Naive thymus-derived CD4-positive, alpha-beta T cell (primary cell): ENCODE measurements at regions of chr6 and their contacts with region 1.

Region 1: DNA sequence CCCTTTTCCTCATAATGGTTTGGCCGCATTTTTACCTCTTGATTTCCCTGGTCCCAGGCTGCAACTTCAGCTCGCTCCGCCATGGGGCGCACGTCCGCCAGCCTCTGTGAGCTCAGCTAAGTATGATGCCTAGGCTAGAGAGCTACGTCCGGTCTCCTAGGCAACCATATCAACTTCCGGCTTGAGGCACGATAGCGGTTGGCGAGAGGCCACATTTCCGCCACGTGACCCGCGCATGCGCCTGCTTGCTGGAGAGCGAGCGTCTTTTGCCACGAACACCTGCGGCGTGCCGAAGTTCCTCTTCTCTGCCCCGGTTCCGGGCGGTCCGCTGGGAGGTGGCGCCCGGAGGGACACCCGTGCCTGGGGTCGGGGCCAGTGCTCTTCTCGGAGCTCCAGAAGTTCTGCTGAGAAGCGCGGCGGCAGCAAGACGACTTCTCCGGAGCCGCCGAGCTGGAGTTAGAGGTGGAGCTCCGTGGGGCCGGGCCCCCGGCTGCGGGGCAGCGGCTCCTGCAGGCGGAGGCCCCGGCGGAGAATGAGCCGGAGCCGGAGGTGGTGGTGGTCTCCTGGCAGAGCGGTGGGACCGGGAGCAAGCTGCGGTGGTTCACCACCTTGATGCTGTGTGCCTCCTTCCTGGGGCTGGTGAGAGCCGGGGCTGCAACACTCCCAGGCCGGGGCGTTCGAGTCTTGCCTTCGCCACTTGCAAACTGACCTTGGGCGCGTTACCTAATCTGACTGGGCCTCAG is 172.0 kb downstream of the SLC16A10 start:
- DNase-seq: peak; percentile 98 to 99 (median 99)
- ATAC-seq: peak; percentile 99
- H3K4me3 ChIP-seq: peak overlapping the region; percentile 89
- H3K4me3 Mint-ChIP-seq: peak overlapping the region; percentile 75 to 90 (median 86)
- H3K27ac ChIP-seq: peak overlapping the region; percentile 87
- H3K27ac Mint-ChIP-seq: peak overlapping the region; percentile 83 to 97 (median 92)
- H3K4me1 ChIP-seq: peaks cover 6 to 17% of the 10 kb centered on the region in 2 donors
- H3K4me1 Mint-ChIP-seq: peaks cover 12 to 37% (median 30%) of the 10 kb centered on the region in 7 donors
- H3K27me3 ChIP-seq: no peaks in the 10 kb centered on the region
- H3K27me3 Mint-ChIP-seq: peaks cover 0 to 18% (median 0%) of the 10 kb centered on the region in 5 donors

Region 2: DNA sequence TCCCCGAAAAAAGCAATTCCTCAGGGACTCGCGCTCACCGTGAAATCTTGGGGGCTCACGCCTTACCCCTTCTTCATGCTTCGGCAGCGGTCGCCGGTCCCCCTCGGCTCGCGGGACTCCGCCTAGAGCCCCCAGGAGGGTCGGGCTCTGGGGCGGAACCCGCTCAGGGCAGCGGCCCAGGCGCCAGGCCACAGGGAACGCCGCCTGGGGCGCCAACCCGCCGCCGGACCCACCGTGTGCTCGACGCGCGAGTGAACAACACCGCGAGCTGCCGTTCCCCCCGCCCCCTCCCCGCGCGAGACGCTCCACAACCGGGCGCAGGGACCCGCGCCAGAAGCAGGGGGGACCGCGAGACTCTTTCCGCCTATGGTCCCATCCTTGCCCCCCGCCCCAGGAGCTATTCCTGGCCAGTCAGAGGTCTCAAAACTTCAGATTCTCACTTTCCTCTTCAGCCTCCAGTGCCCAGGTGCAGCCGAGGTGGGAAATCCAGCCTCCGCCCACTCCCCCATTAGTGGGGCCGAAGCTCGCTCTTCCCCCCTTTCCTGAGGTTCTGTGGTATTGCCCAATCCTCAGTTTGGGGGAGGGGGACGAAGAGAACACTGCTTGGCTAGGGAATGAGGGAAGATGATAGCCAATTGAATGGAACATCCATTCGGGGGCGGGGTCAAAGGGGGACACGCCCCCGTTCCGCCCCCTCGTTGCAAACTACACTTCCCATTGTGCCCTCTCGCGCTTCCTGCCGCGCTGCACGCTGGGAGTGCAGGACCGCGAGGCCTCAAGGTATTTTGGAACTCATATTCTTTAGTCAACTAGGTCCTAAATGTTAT is 1079.6 kb before region 1 on chr6 and contains the start of gene WASF1:
- CTCF ChIA-PET with region 1: no interaction called
- POLR2A ChIA-PET with region 1: no interaction called
- intact Hi-C with region 1: loop called in 1 of 2 experiments (anchors 1 kb)
- DNase-seq: peak; percentile 84 to 94 (median 91)
- ATAC-seq: peak; percentile 96
- H3K4me3 ChIP-seq: peak within 1 kb of the TSS; percentile 83
- H3K4me3 Mint-ChIP-seq: peak within 1 kb of the TSS in 6 of 10 donors; percentile 84 to 90 (median 88)
- H3K27ac ChIP-seq: peak within 1 kb of the TSS; percentile 90
- H3K27ac Mint-ChIP-seq: peak within 1 kb of the TSS in 8 of 9 donors; percentile 2 to 87 (median 66)
- H3K4me1 ChIP-seq: peaks cover 17 to 23% of the 10 kb centered on the region in 2 donors
- H3K4me1 Mint-ChIP-seq: peaks cover 4 to 8% (median 5%) of the 10 kb centered on the region in 7 donors
- H3K27me3 ChIP-seq: peaks cover 0 to 7% of the 10 kb centered on the region in 2 donors
- H3K27me3 Mint-ChIP-seq: peaks cover 8 to 21% (median 9%) of the 10 kb centered on the region in 5 donors
- total RNA-seq, gene WASF1: 0.19 to 4.7 (median 0.51) TPM

Region 3: DNA sequence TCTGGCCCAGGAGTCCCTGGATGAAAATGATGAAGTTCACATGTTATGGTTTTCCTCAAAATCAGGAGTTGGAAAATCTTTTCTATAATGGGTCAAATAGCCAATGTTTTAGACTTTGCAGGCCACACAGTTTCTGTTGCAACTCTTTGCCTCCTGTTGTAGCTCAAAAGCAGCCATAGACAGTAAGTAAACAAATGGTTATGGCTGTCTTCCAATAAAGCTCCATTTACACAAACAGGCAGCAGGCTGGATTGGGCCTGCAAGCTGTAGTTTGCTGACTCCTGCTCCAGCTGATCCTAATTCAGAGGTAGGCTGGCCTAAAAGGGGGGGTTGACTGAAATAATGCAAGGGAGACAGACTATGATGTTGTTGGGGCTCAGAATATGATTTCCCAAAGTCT is 934.1 kb before region 1 on chr6:
- CTCF ChIA-PET with region 1: no interaction called
- POLR2A ChIA-PET with region 1: no interaction called
- intact Hi-C with region 1: no loop called
- DNase-seq: no peak
- ATAC-seq: no peak
- H3K4me3 ChIP-seq: no peak overlapping the region
- H3K4me3 Mint-ChIP-seq: no peak overlapping the region
- H3K27ac ChIP-seq: no peak overlapping the region
- H3K27ac Mint-ChIP-seq: no peak overlapping the region
- H3K4me1 ChIP-seq: no peaks in the 10 kb centered on the region
- H3K4me1 Mint-ChIP-seq: no peaks in the 10 kb centered on the region
- H3K27me3 ChIP-seq: no peaks in the 10 kb centered on the region
- H3K27me3 Mint-ChIP-seq: peaks cover 0 to 9% (median 0%) of the 10 kb centered on the region in 5 donors

Region 4: GRCh38 chr6:110958329-110959192 is 300.7 kb before region 1 on chr6 and contains the start of gene GTF3C6:
- CTCF ChIA-PET with region 1: no interaction called
- POLR2A ChIA-PET with region 1: no interaction called
- intact Hi-C with region 1: loop called (anchors 1 kb)
- DNase-seq: peak; percentile 85 to 94 (median 91)
- ATAC-seq: peak; percentile 99
- H3K4me3 ChIP-seq: peak within 1 kb of the TSS; percentile 86
- H3K4me3 Mint-ChIP-seq: peak within 1 kb of the TSS; percentile 95 to 99 (median 96)
- H3K27ac ChIP-seq: peak within 1 kb of the TSS; percentile 81
- H3K27ac Mint-ChIP-seq: peak within 1 kb of the TSS; percentile 96 to 99 (median 97)
- H3K4me1 ChIP-seq: peaks cover 4% of the 10 kb centered on the region in 2 donors
- H3K4me1 Mint-ChIP-seq: peaks cover 13 to 27% (median 20%) of the 10 kb centered on the region in 7 donors
- H3K27me3 ChIP-seq: no peaks in the 10 kb centered on the region
- H3K27me3 Mint-ChIP-seq: peaks cover 0 to 7% (median 0%) of the 10 kb centered on the region in 5 donors
- total RNA-seq, gene GTF3C6: 18.1 to 100 (median 29.9) TPM

Region 5: DNA sequence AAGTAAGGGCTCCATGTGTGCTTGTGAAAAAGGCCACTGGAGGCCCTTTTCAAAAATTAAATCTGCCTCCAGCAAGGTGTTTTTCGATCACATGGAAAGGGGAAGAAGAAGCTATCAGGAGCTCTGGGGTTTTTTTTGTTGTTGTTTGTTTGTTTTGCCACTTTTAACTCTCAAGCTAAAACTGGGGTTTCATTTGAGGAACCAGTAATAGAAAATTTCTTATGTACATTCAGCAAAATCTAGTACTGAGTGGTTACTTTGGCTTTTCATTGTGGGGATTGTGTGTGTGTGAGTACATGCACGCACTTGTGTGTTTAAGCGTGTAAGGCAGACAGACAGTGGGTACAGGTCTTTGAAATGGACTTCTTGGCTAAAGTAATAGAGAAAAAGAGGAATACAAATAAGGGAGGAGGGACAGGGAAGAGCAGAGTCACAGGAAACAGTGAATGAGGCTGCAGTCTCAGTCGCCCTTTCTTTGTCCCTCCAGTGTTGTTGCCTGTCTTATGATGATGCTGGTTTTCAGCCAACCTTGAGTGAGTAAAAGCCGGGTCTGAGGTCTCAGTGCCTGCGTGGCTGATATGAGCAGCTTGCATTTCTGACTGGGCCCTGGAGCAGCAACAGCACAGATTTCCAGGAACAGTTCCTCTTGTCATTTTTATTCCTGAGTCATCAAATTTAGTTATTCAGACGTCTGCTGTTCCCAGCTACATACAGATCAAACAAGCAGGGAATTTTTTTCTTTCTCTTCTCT is 145.7 kb before region 1 on chr6:
- CTCF ChIA-PET with region 1: no interaction called
- POLR2A ChIA-PET with region 1: no interaction called
- intact Hi-C with region 1: loop called in 1 of 2 experiments (anchors 1 kb)
- DNase-seq: peak in 4 of 9 donors; percentile 23 to 33 (median 23)
- ATAC-seq: peak; percentile 75
- H3K4me3 ChIP-seq: peak overlapping the region; percentile 1
- H3K4me3 Mint-ChIP-seq: peak overlapping the region; percentile 13 to 90 (median 74)
- H3K27ac ChIP-seq: peak overlapping the region; percentile 58
- H3K27ac Mint-ChIP-seq: peak overlapping the region; percentile 53 to 96 (median 93)
- H3K4me1 ChIP-seq: peaks cover 5 to 26% of the 10 kb centered on the region in 2 donors
- H3K4me1 Mint-ChIP-seq: peaks cover 12 to 74% (median 46%) of the 10 kb centered on the region in 7 donors
- H3K27me3 ChIP-seq: no peaks in the 10 kb centered on the region
- H3K27me3 Mint-ChIP-seq: no peaks in the 10 kb centered on the region

Region 6: DNA sequence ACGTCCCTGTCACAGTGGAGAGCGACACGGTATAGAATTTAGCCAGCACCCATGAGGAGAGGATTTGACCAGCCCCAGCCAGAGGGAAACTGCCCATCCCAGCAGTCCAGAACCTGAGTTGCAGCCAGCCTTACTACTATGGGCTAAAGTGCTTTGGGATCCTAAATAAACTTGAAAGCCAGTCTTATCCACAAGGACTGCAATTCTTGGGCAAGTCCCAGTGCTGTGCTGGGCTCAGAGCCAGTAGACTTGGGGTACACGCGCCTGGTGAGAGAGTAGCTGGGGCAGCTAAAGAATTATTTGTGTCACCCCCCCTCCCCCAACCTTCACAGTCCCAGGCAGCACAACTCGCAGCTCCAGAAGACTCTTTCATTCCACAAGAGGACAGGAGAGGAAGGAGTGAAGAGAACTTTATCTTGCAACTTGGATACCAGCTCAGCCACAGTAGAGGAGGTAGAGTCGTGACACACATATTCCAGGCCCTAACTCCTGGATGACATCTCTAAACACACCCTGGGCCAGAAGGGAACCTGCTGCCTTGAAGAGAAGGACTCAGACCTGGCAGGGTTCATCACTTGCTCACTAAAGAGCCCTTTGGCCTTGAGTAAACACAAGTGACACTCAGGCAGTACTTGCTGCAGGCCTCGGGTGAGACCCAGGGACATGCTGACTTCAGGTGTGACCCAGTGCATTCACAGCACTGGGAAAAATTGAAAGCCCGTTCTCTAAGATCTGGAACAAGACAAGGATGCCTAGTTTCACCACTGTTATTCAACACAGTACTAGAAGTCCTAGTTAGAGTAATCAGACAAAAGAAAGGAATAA is 123.4 kb after region 1 on chr6:
- CTCF ChIA-PET with region 1: no interaction called
- POLR2A ChIA-PET with region 1: no interaction called
- intact Hi-C with region 1: no loop called
- DNase-seq: no peak
- ATAC-seq: no peak
- H3K4me3 ChIP-seq: no peak overlapping the region
- H3K4me3 Mint-ChIP-seq: no peak overlapping the region
- H3K27ac ChIP-seq: no peak overlapping the region
- H3K27ac Mint-ChIP-seq: peak overlapping the region in 1 of 9 donors; percentile 64
- H3K4me1 ChIP-seq: no peaks in the 10 kb centered on the region
- H3K4me1 Mint-ChIP-seq: peaks cover 0 to 13% (median 0%) of the 10 kb centered on the region in 7 donors
- H3K27me3 ChIP-seq: no peaks in the 10 kb centered on the region
- H3K27me3 Mint-ChIP-seq: no peaks in the 10 kb centered on the region

Region 7: GRCh38 chr6:111605100-111605751 is 346.0 kb after region 1 on chr6:
- CTCF ChIA-PET with region 1: interaction called, 3 read pairs
- POLR2A ChIA-PET with region 1: interaction called, 5 read pairs
- intact Hi-C with region 1: loop called (anchors 1 kb)
- DNase-seq: peak in 8 of 9 donors; percentile 12 to 60 (median 34)
- ATAC-seq: peak; percentile 56
- H3K4me3 ChIP-seq: peak overlapping the region; percentile 85
- H3K4me3 Mint-ChIP-seq: peak overlapping the region; percentile 89 to 97 (median 94)
- H3K27ac ChIP-seq: peak overlapping the region; percentile 84
- H3K27ac Mint-ChIP-seq: peak overlapping the region; percentile 90 to 98 (median 95)
- H3K4me1 ChIP-seq: peaks cover 13 to 15% of the 10 kb centered on the region in 2 donors
- H3K4me1 Mint-ChIP-seq: peaks cover 25 to 61% (median 58%) of the 10 kb centered on the region in 7 donors
- H3K27me3 ChIP-seq: no peaks in the 10 kb centered on the region
- H3K27me3 Mint-ChIP-seq: peaks cover 0 to 2% (median 0%) of the 10 kb centered on the region in 5 donors

Region 8: GRCh38 chr6:111873178-111874024 is 614.1 kb after region 1 on chr6 and contains the start of gene FYN:
- CTCF ChIA-PET with region 1: no interaction called
- POLR2A ChIA-PET with region 1: interaction called, 3 read pairs
- intact Hi-C with region 1: loop called (anchors 1 to 10 kb)
- DNase-seq: peak; percentile 97 to 100 (median 99)
- ATAC-seq: peak; percentile 96
- H3K4me3 ChIP-seq: peak within 1 kb of the TSS; percentile 89
- H3K4me3 Mint-ChIP-seq: peak within 1 kb of the TSS; percentile 95 to 100 (median 98)
- H3K27ac ChIP-seq: peak within 1 kb of the TSS; percentile 86
- H3K27ac Mint-ChIP-seq: peak within 1 kb of the TSS; percentile 93 to 99 (median 96)
- H3K4me1 ChIP-seq: peaks cover 32 to 34% of the 10 kb centered on the region in 2 donors
- H3K4me1 Mint-ChIP-seq: peaks cover 22 to 45% (median 38%) of the 10 kb centered on the region in 7 donors
- H3K27me3 ChIP-seq: no peaks in the 10 kb centered on the region
- H3K27me3 Mint-ChIP-seq: no peaks in the 10 kb centered on the region
- total RNA-seq, gene FYN: 200 to 720 (median 447) TPM

Region 9: GRCh38 chr6:111985202-111985731 is 726.0 kb after region 1 on chr6:
- CTCF ChIA-PET with region 1: no interaction called
- POLR2A ChIA-PET with region 1: no interaction called
- intact Hi-C with region 1: no loop called
- DNase-seq: peak in 5 of 9 donors; percentile 34 to 50 (median 43)
- ATAC-seq: peak; percentile 54
- H3K4me3 ChIP-seq: no peak overlapping the region
- H3K4me3 Mint-ChIP-seq: peak overlapping the region in 9 of 10 donors; percentile 1 to 75 (median 56)
- H3K27ac ChIP-seq: peak overlapping the region; percentile 47
- H3K27ac Mint-ChIP-seq: peak overlapping the region; percentile 2 to 96 (median 77)
- H3K4me1 ChIP-seq: peaks cover 27 to 87% of the 10 kb centered on the region in 2 donors
- H3K4me1 Mint-ChIP-seq: peaks cover 59 to 99% (median 90%) of the 10 kb centered on the region in 7 donors
- H3K27me3 ChIP-seq: no peaks in the 10 kb centered on the region
- H3K27me3 Mint-ChIP-seq: no peaks in the 10 kb centered on the region

Region 10: GRCh38 chr6:112043032-112044007 is 784.1 kb after region 1 on chr6:
- CTCF ChIA-PET with region 1: interaction called, 24 read pairs
- POLR2A ChIA-PET with region 1: interaction called, 10 read pairs
- intact Hi-C with region 1: loop called (anchors 1 kb)
- DNase-seq: peak; percentile 82 to 93 (median 90)
- ATAC-seq: peak; percentile 95
- H3K4me3 ChIP-seq: peak overlapping the region; percentile 92
- H3K4me3 Mint-ChIP-seq: peak overlapping the region; percentile 92 to 99 (median 98)
- H3K27ac ChIP-seq: peak overlapping the region; percentile 91
- H3K27ac Mint-ChIP-seq: peak overlapping the region; percentile 96 to 100 (median 99)
- H3K4me1 ChIP-seq: peaks cover 5 to 24% of the 10 kb centered on the region in 2 donors
- H3K4me1 Mint-ChIP-seq: peaks cover 10 to 51% (median 35%) of the 10 kb centered on the region in 7 donors
- H3K27me3 ChIP-seq: no peaks in the 10 kb centered on the region
- H3K27me3 Mint-ChIP-seq: no peaks in the 10 kb centered on the region